ENCODE measurements at regions of chr3 and their contacts with region 1.

Region 1: GRCh38 chr3:125141596-125142419 is 70.7 kb downstream of the SLC12A8 start:
- DNase-seq: peak; percentile 93

Region 2: GRCh38 chr3:124995460-124995994 is 146.3 kb before region 1 on chr3:
- intact Hi-C with region 1: loop called in 1 of 2 experiments (anchors 10 kb)
- DNase-seq: no peak

Region 3: DNA sequence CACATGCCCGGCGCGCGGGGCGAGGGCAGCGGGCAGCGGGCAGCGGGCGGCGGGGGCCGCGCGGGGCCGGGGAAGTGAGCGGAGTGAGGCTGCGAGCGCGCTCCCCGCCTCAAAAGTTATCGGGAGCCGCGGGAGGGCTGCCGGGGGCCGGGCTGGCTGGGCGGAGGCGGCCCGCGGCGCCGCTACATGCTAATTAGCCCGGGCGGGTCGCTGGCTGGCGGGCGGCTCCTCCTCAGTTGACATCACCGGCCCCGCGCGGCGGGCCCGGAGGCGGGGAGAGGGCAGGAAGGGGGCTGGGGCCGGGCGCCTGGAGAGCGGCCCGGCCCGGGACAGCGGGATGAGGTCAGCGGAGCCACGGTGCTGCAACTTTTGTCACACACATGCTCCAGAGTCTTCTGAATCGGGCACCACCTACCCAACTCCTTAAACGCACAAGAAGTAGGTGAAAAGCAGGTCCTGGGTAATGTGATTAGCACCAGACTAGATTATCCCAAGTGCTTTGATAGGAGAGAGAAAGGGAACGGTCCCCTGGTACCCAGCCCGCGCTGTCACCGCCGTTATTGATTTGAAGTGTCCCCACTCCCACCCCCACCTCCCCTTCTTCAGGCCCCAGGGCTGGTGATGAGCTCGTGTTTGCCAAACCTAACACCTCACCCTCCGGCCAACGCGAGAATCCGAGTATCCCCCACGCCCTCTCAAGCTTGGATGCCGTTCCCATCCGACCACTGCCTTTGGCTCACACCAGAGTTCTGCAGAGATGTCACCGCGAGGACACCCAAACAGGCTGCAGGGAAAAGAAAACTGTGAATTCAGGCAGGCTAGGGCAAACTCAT is 85.7 kb before region 1 on chr3 and contains the start of gene HEG1:
- intact Hi-C with region 1: loop called in 1 of 2 experiments (anchors 5 kb)
- DNase-seq: peak; percentile 97
- total RNA-seq, gene HEG1: 101 to 123 TPM

Region 4: DNA sequence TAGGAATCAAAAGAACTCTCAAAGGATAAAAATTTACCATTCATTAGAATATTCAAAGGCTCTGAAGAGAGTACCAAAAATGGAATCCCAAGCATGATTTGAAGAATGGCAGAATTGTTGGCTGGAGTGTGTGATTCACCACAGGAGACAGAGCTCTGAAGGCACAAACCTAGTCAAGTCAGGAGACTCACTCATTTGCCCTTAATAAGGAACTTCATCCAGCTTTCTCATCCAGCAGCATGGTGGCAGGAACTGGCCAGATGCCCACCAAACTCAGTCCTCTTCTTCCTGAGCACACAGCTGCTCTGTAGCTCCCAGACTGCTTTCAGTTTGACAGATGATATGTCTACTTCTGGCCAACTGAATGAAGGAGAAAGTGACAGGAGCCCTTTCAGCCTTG is 69.5 kb before region 1 on chr3:
- intact Hi-C with region 1: no loop called
- DNase-seq: no peak

Region 5: GRCh38 chr3:125129512-125129962 is 12.3 kb before region 1 on chr3:
- intact Hi-C with region 1: loop called in 1 of 2 experiments (anchors 1 kb)
- DNase-seq: peak; percentile 92

Region 6: GRCh38 chr3:125175295-125176078 is 33.7 kb after region 1 on chr3:
- intact Hi-C with region 1: loop called in 1 of 2 experiments (anchors 1 kb)
- DNase-seq: no peak

Measured in posterior vena cava (tissue), 2 donors.